ENCODE measurements at regions of chr18 and their contacts with region 1.

Region 1: DNA sequence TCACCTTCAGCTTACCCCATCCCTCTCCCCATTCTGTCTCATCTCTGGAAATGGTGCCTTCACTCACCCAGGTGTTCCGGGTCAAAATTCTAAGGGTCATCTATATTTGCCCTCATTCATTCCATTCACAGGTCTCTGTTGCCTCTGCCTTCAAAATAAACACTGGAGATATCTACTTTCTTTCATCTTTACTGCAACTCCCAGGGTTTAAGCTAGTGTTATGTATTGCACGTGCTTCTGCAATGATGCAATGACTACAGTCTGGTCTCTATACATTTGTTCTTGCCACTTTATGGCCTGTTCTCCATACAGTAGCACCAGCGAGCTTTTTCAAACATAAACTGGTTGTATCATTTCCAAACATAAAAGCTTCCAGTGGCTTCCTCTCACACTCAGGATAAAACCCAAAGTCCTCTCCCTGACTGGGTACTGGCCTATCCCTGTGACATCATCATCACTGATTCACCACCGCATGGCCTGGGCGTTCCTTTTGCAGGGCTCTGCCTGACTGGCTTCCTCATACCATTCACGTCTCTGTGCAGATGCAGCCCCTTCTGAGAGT is 14.3 kb downstream of the DSG2 start:
- DNase-seq: peak; percentile 80 to 85 (median 82)
- ATAC-seq: peak; percentile 95
- H3K4me3 ChIP-seq: no peak overlapping the region
- H3K4me1 ChIP-seq: peaks cover 19% of the 10 kb centered on the region
- CTCF ChIP-seq: no peak

Region 2: DNA sequence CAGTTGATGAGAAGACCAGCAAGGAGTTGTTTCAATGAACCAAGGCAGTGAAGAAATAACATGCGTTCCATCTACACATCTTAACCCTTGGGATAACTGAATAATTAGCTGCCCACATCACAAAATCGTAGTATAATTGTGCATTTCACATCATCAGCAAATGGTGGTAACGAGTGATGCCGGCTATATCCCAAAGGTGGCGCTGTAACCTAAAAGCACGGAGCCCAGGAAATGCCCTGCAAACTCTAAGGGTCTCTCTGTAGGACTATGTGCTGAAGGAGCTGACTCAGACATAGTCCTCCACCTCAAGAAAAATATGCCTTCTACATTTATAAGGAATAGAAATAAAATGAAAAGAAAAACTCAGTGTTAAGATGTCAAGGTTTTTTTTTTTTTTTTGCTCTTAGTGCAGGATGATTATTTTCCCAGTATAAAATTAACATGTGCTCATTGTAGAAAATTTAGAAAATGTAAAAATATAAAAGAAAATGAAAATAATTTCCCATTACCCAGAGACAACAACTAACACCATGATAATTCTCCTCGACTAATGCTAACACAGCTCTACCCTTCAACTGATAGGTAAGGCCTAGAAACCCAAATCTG is 87.8 kb before region 1 on chr18:
- intact Hi-C with region 1: loop called in 1 of 2 experiments (anchors 10 kb)
- DNase-seq: peak in 2 of 3 donors; percentile 53 to 76
- ATAC-seq: peak; percentile 82
- H3K4me3 ChIP-seq: no peak overlapping the region
- H3K4me1 ChIP-seq: no peaks in the 10 kb centered on the region
- CTCF ChIP-seq: peak; percentile 53

Region 3: GRCh38 chr18:31720867-31721266 is 208.6 kb after region 1 on chr18:
- intact Hi-C with region 1: no loop called
- DNase-seq: no peak
- ATAC-seq: no peak
- H3K4me3 ChIP-seq: no peak overlapping the region
- H3K4me1 ChIP-seq: peaks cover 5% of the 10 kb centered on the region
- CTCF ChIP-seq: no peak

Region 4: DNA sequence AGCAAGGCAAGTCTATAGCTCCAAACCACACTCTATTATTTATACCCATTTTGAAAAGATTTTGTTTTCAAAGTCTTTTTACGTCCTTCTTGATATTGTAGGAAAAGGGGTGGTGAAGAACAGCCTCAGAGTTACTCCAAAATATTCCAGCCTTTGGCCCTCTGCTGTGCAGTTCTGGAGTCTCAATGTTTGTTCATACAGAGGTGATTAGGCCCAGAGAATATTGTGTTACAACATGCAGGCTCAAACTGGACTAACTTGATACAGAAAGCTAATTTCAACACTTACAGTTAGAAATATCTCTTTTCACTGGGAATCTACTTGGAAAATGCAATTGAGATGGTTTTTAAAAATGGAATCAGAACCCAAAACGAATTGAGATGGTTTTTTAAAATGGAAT is 288.8 kb after region 1 on chr18:
- intact Hi-C with region 1: no loop called
- DNase-seq: no peak
- ATAC-seq: no peak
- H3K4me3 ChIP-seq: no peak overlapping the region
- H3K4me1 ChIP-seq: no peaks in the 10 kb centered on the region
- CTCF ChIP-seq: no peak

Measured in mucosa of descending colon (tissue), 3 donors.